Activated CD4-positive, alpha-beta memory T cell treated with anti-CD3 and anti-CD28 coated beads, Interleukin-2, amount 10 ng/mL, durations not matched to agents 7 days and 5 days (primary cell): ENCODE measurements at regions of chr12 and their contacts with region 1.

Region 1: GRCh38 chr12:6607751-6608591 is 792 bp upstream of the CHD4 start:
- DNase-seq: peak; percentile 72
- H3K4me3 Mint-ChIP-seq: no peak overlapping the region
- H3K27ac Mint-ChIP-seq: no peak overlapping the region
- H3K4me1 Mint-ChIP-seq: peaks cover 53% of the 10 kb centered on the region
- H3K27me3 Mint-ChIP-seq: no peaks in the 10 kb centered on the region

Region 2: GRCh38 chr12:6195665-6196535 is 412.1 kb before region 1 on chr12:
- CTCF ChIA-PET with region 1: no interaction called
- POLR2A ChIA-PET with region 1: no interaction called
- DNase-seq: peak; percentile 72
- H3K4me3 Mint-ChIP-seq: no peak overlapping the region
- H3K27ac Mint-ChIP-seq: no peak overlapping the region
- H3K4me1 Mint-ChIP-seq: peaks cover 11% of the 10 kb centered on the region
- H3K27me3 Mint-ChIP-seq: peaks cover 49% of the 10 kb centered on the region

Region 3: GRCh38 chr12:6570264-6570887 is 37.6 kb before region 1 on chr12:
- CTCF ChIA-PET with region 1: interaction called, 5 read pairs
- POLR2A ChIA-PET with region 1: interaction called, 11 read pairs
- DNase-seq: peak; percentile 56
- H3K4me3 Mint-ChIP-seq: peak overlapping the region; percentile 43
- H3K27ac Mint-ChIP-seq: peak overlapping the region; percentile 49
- H3K4me1 Mint-ChIP-seq: peaks cover 54% of the 10 kb centered on the region
- H3K27me3 Mint-ChIP-seq: no peaks in the 10 kb centered on the region

Region 4: GRCh38 chr12:6582196-6582595 is 25.8 kb before region 1 on chr12:
- CTCF ChIA-PET with region 1: no interaction called
- POLR2A ChIA-PET with region 1: interaction called, 12 read pairs
- DNase-seq: no peak
- H3K4me3 Mint-ChIP-seq: no peak overlapping the region
- H3K27ac Mint-ChIP-seq: no peak overlapping the region
- H3K4me1 Mint-ChIP-seq: peaks cover 4% of the 10 kb centered on the region
- H3K27me3 Mint-ChIP-seq: no peaks in the 10 kb centered on the region

Region 5: DNA sequence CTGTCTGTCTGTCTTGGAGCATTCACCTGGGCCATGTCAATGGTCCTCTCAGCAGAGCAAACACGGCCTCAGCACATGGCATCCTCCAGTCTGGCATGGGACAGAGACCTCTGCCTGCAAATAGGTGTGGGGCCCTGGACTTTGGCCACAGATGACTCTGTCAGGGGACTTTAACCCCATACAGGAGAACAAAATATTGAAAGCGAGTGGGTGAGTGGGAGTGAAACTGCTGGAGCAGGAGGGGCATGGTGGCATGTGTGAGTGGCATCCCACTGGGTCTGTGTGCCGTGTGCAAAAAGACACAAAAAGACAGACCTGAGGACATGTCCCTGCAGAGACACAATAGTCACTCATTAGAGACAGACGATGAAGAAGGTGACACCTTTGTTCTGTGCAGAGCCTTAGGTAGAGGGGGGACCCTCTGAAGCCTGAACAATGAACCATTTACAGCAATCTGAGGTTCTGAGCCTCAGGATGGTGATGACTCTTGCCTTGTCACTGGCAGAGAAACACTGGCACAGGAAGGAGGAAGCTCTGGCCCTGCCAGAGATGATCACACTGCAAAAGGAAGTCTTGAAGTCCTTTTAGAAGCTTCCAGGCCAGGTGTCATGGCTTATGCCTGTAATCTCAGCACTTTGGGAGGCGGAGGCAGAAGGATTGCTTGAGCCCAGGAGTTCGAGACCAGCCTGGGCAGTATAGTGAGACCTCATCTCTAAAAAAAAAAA is 171.9 kb after region 1 on chr12:
- CTCF ChIA-PET with region 1: no interaction called
- POLR2A ChIA-PET with region 1: no interaction called
- DNase-seq: no peak
- H3K4me3 Mint-ChIP-seq: no peak overlapping the region
- H3K27ac Mint-ChIP-seq: peak overlapping the region; percentile 74
- H3K4me1 Mint-ChIP-seq: peaks cover 68% of the 10 kb centered on the region
- H3K27me3 Mint-ChIP-seq: peaks cover 3% of the 10 kb centered on the region